Activated CD8-positive, alpha-beta T cell treated with anti-CD3 and anti-CD28 coated beads for 36 hours (primary cell): ENCODE measurements at regions of chr16 and their contacts with region 1.

Region 1: DNA sequence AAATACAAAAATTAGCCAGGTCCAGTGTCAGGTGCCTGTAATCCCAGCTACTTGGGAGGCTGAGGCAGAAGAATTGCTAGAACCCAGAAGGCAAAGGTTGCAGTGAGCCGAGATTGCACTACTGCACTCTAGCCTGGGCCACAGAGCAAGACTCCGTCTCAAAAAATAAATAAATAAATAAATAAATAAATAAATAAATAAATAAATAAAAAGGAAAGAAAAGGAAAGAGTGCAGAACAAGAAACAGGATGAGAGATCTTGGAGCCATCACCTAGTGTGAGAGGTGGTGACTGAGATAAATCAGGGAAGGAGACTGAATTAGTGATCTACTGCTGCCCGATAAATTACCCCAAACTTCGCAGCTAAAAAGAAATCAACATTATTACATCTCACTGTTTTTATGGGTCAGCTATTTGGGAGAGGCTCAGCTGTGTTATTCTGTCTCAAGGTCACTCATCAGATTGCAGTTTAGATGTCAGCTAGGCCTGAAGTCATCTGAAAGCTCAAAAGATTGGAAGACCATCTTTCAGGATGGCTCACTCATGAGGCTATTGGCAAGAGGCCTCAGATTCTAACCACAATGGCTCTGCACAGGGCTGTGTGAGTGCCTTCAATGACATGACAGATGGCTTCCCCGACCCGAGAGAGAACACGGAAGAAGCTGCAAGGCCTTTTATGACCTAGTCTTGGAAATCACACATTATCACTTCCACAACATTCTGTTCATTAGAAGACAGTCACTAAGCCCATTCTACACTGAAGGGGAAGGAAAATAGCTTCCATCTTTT is 66.4 kb downstream of the CMC2 start:
- DNase-seq: no peak
- ATAC-seq: no peak
- H3K4me3 Mint-ChIP-seq: no peak overlapping the region
- H3K27ac Mint-ChIP-seq: no peak overlapping the region
- H3K4me1 Mint-ChIP-seq: no peaks in the 10 kb centered on the region
- H3K27me3 Mint-ChIP-seq: peaks cover 6% of the 10 kb centered on the region
- CTCF ChIP-seq: no peak

Region 2: GRCh38 chr16:80924372-80924978 is 15.8 kb before region 1 on chr16:
- CTCF ChIA-PET with region 1: interaction called, 15 read pairs
- POLR2A ChIA-PET with region 1: no interaction called
- intact Hi-C with region 1: no loop called
- DNase-seq: peak; percentile 81
- ATAC-seq: peak; percentile 83
- H3K4me3 Mint-ChIP-seq: no peak overlapping the region
- H3K27ac Mint-ChIP-seq: no peak overlapping the region
- H3K4me1 Mint-ChIP-seq: peaks cover 6% of the 10 kb centered on the region
- H3K27me3 Mint-ChIP-seq: peaks cover 7% of the 10 kb centered on the region
- CTCF ChIP-seq: peak; percentile 64

Region 3: GRCh38 chr16:81280393-81280792 is 340.1 kb after region 1 on chr16:
- CTCF ChIA-PET with region 1: no interaction called
- POLR2A ChIA-PET with region 1: no interaction called
- intact Hi-C with region 1: no loop called
- DNase-seq: no peak
- ATAC-seq: no peak
- H3K4me3 Mint-ChIP-seq: no peak overlapping the region
- H3K27ac Mint-ChIP-seq: no peak overlapping the region
- H3K4me1 Mint-ChIP-seq: no peaks in the 10 kb centered on the region
- H3K27me3 Mint-ChIP-seq: no peaks in the 10 kb centered on the region
- CTCF ChIP-seq: no peak